Prostate gland (tissue), 2 donors: ENCODE measurements at regions of chr16 and their contacts with region 1.

Region 1: GRCh38 chr16:30922960-30923535 is 324 bp upstream of the FBXL19 start:
- DNase-seq: peak; percentile 100
- H3K4me3 ChIP-seq: peak overlapping the region; percentile 61 to 71
- H3K27ac ChIP-seq: peak overlapping the region; percentile 92 to 96
- H3K4me1 ChIP-seq: no peaks in the 10 kb centered on the region
- H3K27me3 ChIP-seq: no peaks in the 10 kb centered on the region
- CTCF ChIP-seq: peak in 1 of 4 experiments; percentile 5
- POLR2A ChIP-seq: peak; percentile 53

Region 2: GRCh38 chr16:30844671-30845449 is 78.2 kb before region 1 on chr16:
- intact Hi-C with region 1: loop called (anchors 5 kb)
- DNase-seq: peak; percentile 78
- H3K4me3 ChIP-seq: no peak overlapping the region
- H3K27ac ChIP-seq: peak overlapping the region; percentile 31 to 38
- H3K4me1 ChIP-seq: peaks cover 3% of the 10 kb centered on the region
- H3K27me3 ChIP-seq: no peaks in the 10 kb centered on the region
- CTCF ChIP-seq: peak in 3 of 4 experiments; percentile 79 to 85 (median 79)
- POLR2A ChIP-seq: no peak

Region 3: DNA sequence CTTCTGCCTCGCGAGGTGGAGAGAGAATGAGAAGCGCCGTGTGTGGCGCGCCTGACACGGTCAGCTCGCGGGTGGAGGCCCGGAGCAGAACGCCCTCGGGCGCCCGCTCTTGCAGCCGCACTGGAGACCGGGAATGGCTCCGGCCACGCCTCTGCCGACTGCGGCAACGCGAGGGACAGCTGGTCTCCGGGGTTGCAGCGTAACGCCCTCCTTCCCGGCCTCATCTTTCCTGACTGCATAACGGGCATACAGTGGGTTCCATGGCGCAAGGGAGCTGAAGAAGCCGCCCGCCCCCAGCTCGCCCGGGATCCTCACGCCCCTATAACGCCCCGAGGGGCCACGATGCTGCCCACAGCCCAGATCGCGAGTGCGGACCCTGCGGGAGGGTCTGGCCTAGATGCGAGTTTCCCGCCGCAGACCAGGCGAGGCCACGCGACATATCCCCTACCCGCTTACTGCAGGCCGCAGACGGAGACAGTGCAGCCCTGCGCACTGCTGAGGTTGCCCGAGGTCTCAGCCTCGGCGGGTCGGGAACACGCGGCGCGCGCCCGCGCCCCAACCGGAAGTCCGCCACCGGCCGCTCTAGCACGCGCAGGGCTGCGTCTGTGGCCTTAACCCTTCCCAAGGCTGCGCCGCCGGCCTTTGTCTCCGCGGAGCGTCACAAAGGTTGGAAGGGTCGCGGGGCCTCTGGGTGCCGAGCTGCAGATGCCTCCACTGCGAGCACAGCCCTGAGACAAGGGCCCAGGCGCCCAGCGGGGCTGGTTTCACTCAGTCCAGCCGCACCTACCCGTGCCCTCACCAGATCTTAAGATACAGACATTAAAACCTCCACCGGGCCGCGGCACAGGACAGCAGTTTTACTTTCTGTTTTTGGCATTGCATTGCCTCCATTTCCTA is 48.0 kb before region 1 on chr16:
- intact Hi-C with region 1: loop called (anchors 2 kb)
- DNase-seq: peak; percentile 87
- H3K4me3 ChIP-seq: peak overlapping the region; percentile 74 to 75
- H3K27ac ChIP-seq: peak overlapping the region; percentile 83 to 89
- H3K4me1 ChIP-seq: peaks cover 9% of the 10 kb centered on the region
- H3K27me3 ChIP-seq: no peaks in the 10 kb centered on the region
- CTCF ChIP-seq: no peak
- POLR2A ChIP-seq: peak; percentile 84

Region 4: GRCh38 chr16:30896889-30897733 is 25.9 kb before region 1 on chr16:
- intact Hi-C with region 1: loop called (anchors 2 kb)
- DNase-seq: peak; percentile 89
- H3K4me3 ChIP-seq: peak overlapping the region; percentile 47 to 48
- H3K27ac ChIP-seq: peak overlapping the region; percentile 99 to 100
- H3K4me1 ChIP-seq: peaks cover 15% of the 10 kb centered on the region
- H3K27me3 ChIP-seq: no peaks in the 10 kb centered on the region
- CTCF ChIP-seq: peak in 1 of 4 experiments; percentile 4
- POLR2A ChIP-seq: peak; percentile 19